Adrenal gland (tissue), 19 donors: ENCODE measurements at regions of chr1 and their contacts with region 1.

Region 1: DNA sequence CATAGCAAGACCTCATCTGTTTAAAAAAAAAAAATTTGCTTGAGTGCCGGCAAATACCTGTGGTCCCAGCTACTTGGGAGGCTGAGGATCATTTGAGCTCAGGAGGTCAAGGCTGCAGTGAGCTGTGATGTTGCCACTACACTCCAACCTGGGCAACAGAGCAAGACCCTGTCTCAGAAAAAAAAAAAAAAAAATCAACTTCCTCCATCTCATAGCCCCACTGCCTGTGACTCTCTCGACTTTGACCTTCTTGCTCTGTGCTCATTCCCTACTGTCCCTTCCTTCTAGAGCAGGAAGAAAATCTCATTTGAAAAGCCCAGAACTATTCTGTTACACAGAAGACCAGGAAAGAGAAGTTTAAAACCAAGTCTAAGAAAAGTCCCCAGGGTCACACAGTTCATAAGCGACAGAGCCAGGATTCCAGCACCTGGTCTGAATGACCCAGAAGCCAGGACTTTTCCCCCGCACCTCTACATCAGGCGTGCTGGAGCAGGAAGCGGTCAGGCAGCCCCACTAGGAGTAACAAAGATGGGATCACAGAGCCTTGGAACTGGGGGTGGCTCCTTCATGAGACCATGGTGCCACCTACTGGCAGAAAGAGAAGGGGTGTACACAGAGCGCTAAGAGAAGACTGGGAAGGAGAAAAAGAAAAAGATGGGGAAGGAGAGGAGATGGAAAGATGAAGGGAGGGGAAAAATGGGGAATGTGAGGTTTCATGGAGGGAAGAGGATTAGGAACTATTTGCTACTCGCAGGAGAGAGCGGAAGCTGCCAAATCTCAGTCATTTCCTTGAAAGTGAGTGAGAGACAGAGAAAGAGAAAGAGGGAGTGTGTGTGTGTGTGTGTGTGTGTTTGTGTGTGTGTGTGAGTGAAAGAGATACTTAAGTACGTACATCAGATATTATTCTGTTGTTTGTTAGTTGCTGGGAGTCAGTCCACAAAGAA is 3.1 kb upstream of the P3R3URF start:
- DNase-seq: peak; percentile 82 to 94 (median 88)
- H3K4me3 ChIP-seq: peak overlapping the region in 1 of 4 donors; percentile 20
- H3K27ac ChIP-seq: no peak overlapping the region
- H3K4me1 ChIP-seq: peaks cover 15 to 30% of the 10 kb centered on the region in 2 donors
- H3K27me3 ChIP-seq: no peaks in the 10 kb centered on the region
- CTCF ChIP-seq: peak; percentile 85 to 99 (median 94)
- POLR2A ChIP-seq: no peak

Region 2: DNA sequence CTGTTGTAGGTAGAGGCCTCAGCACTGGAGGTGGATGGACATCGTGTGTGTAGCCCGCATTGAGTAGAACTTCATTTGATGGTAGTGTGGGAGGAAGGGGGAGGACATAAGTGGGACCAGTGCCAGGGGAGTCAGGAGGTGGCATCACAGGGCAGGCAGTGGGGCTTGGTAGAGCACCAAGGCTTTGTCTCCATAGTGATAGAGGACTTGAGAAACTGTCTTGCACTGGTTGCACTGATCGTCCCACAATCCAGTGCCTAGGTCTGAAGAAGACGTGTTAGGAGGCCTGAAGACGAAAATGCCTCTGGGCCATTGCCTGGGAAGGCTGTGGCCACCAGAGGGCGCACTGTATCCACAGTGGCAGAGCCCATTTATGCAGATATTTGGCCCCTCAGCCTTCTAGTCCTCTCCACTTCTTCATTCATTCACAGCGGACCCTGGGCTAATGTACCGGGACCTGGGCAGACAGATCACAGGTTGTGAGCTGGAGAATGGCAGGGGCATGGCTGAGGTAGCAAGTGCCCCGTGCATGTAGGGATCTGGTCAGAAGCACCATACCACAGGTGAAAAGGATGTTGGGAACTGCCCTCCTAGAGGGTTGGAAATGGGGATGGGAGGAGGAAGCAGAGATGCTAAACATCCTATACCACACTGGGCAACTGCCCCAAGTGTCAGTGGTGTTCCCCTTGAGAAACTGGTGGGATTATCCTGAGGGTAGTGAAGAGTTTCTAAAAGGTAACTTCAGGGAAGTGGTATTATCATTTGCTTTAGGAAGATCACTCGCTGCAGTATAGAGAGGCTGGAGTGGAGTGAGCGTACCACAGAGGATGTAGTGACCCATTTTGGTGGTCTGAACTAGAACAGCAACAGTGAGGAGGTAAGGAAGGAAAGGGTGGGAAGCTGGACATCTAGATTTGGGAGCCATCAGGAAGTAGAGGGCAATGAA is 142.2 kb before region 1 on chr1:
- intact Hi-C with region 1: loop called (anchors 2 kb)
- DNase-seq: peak; percentile 78 to 97 (median 90)
- H3K4me3 ChIP-seq: no peak overlapping the region
- H3K27ac ChIP-seq: no peak overlapping the region
- H3K4me1 ChIP-seq: peaks cover 13 to 25% of the 10 kb centered on the region in 2 donors
- H3K27me3 ChIP-seq: no peaks in the 10 kb centered on the region
- CTCF ChIP-seq: peak; percentile 95 to 99 (median 98)
- POLR2A ChIP-seq: no peak